ENCODE measurements at regions of chr14 and their contacts with region 1.

Region 1: DNA sequence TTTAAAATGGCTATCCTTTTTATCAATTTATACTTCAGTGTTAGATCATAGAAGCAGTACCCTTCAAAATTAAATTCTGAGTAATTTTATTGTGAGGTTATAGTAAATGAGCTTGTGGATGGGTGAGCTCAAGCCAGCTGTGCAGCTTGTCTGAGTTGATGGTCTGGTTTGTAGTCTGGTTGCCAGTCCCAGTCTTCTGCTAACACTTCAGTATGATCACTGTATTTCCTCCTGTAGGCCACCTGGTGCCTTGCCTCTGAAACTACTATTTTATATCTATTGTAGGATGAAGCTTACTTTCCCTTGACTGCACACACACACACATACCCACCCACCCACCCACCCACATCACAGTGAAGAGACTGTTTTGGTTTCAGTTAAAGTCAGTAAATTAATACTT is 496.4 kb downstream of the PCNX1 start:
- DNase-seq: peak; percentile 23
- H3K4me3 ChIP-seq: no peak overlapping the region
- H3K27ac ChIP-seq: no peak overlapping the region
- H3K4me1 ChIP-seq: peaks cover 13% of the 10 kb centered on the region
- H3K27me3 ChIP-seq: no peaks in the 10 kb centered on the region
- CTCF ChIP-seq: peak in 1 of 2 donors; percentile 37

Region 2: GRCh38 chr14:71117839-71118743 is 285.6 kb before region 1 on chr14:
- CTCF ChIA-PET with region 1: no interaction called
- dilution Hi-C with region 1: no loop called
- in situ Hi-C with region 1: no loop called
- intact Hi-C with region 1: no loop called
- DNase-seq: peak; percentile 72
- H3K4me3 ChIP-seq: no peak overlapping the region
- H3K27ac ChIP-seq: peak overlapping the region; percentile 70
- H3K4me1 ChIP-seq: peaks cover 22% of the 10 kb centered on the region
- H3K27me3 ChIP-seq: no peaks in the 10 kb centered on the region
- CTCF ChIP-seq: no peak

Region 3: GRCh38 chr14:71371711-71372396 is 31.8 kb before region 1 on chr14:
- CTCF ChIA-PET with region 1: no interaction called
- dilution Hi-C with region 1: no loop called
- in situ Hi-C with region 1: no loop called
- intact Hi-C with region 1: loop called (anchors 2 kb)
- DNase-seq: peak; percentile 84
- H3K4me3 ChIP-seq: peak overlapping the region; percentile 10 to 35 (median 19)
- H3K27ac ChIP-seq: peak overlapping the region; percentile 99
- H3K4me1 ChIP-seq: peaks cover 19% of the 10 kb centered on the region
- H3K27me3 ChIP-seq: no peaks in the 10 kb centered on the region
- CTCF ChIP-seq: no peak

Region 4: DNA sequence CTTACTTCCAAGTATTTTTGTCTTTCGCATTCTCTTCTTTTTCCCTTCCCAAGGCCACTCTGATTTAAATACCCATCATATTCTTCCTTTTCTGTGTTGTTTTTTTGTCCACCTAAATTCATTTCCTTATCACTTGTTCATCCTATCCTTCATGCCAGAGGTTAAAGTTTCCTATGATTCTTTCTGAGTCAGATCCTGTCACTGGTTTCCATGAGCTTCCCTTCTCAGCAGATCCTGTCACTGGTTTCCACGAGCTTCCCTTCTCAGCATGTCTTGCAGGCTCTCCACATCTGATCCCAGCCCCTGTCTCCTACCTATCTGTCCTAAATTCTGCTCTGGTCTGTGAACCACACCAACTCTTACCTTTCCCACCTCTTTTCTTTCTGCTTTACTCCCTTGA is 216.7 kb after region 1 on chr14:
- CTCF ChIA-PET with region 1: no interaction called
- dilution Hi-C with region 1: no loop called
- in situ Hi-C with region 1: no loop called
- intact Hi-C with region 1: no loop called
- DNase-seq: peak; percentile 46
- H3K4me3 ChIP-seq: no peak overlapping the region
- H3K27ac ChIP-seq: no peak overlapping the region
- H3K4me1 ChIP-seq: peaks cover 20% of the 10 kb centered on the region
- H3K27me3 ChIP-seq: no peaks in the 10 kb centered on the region
- CTCF ChIP-seq: no peak

Measured in mammary epithelial cell (primary cell).